Sciatic nerve (tissue), 2 donors: ENCODE measurements at regions of chr16 and their contacts with region 1.

Region 1: GRCh38 chr16:53356478-53357200 is 77.6 kb upstream of the RBL2 start:
- DNase-seq: no peak
- ATAC-seq: no peak

Region 2: DNA sequence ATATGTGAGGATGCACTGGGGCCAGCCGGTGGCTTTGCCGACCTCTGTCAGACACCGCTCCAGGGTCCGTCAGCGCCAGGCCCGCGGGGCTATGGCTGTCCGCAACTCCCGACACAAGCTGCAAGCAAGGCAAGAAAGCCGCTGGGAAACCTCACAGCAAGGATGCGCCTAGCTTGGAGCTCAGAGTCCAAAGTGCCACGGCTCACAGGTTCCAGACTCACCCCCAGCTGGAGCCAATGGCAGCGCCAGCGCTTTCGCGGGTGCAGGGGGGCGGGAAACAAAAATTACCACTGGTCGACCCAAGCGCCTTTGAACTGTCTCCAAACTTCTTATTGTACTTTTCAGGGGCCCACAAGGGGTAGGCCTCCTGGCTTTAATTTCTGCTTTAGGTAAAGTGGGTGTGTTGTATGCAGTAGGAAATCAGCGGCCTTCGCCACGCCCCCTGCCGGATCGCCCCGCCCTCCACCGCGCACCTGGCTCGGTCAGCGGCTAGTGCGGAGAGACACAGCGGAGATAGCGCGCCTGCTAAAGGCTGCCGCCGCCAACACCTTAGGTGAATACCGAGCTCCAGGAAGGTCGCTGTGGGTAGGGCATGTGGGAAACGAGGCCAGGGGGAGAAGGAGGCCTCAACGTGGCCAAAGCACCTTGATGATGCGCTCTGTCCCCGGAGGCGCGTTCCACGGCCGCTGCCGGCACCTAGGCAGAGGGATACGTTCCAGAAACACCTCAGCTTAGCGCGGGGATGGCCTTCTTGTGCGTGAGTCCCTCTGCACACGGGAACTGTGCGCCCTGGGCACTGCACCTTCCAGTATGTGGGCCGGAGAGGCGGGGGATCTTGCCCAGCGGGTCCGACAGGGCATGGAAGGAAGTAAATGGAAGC is 16.6 kb after region 1 on chr16:
- intact Hi-C with region 1: no loop called
- DNase-seq: no peak
- ATAC-seq: no peak

Region 3: DNA sequence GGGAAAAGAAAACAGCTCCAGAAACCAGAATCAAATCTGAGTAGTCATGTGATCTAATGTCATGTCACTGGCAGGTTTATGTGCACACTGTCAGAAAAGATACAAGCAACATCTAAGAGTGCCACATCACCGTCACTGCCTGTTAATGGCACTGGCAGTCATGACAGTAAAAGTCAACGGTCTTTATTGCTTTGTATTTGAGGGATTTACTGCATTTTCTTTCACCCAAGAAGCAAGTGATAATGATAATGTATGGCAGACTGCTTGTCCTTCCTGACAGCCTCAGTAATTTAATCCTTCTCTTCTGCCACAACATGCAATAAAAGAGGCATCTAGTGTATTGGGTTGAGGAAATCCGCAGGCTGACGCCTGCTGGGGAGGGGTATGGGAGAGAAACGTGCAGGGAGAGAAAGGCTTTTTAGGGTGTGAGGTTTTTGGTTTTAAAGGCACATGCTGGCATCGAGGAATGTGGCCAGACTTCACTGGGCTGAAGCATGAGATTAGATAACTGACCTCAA is 254.6 kb after region 1 on chr16:
- intact Hi-C with region 1: no loop called
- DNase-seq: no peak
- ATAC-seq: no peak

Region 4: DNA sequence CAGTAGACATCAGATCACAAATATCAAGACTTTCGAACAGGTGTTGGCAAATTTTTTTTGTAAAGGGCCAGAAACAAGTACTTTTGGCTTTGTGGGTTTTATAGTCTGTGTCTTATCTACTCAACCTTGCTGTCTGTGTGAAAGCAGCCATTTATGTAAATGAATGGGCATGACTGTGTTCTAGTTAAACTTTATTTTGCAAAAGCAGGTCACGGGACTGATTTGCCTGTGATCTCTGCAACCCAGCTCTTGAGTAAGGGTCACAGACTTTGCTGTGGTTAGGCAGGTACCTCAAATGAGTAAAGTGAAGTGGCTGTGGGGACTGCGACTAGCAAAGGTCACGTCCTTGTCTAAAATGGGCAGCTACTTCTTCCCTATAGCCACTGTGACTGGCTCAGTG is 483.8 kb after region 1 on chr16:
- intact Hi-C with region 1: loop called (anchors 5 kb)
- DNase-seq: no peak
- ATAC-seq: no peak